Activated CD4-positive, alpha-beta T cell treated with anti-CD3 and anti-CD28 coated beads for 36 hours (primary cell): ENCODE measurements at regions of chr6 and their contacts with region 1.

Region 1: DNA sequence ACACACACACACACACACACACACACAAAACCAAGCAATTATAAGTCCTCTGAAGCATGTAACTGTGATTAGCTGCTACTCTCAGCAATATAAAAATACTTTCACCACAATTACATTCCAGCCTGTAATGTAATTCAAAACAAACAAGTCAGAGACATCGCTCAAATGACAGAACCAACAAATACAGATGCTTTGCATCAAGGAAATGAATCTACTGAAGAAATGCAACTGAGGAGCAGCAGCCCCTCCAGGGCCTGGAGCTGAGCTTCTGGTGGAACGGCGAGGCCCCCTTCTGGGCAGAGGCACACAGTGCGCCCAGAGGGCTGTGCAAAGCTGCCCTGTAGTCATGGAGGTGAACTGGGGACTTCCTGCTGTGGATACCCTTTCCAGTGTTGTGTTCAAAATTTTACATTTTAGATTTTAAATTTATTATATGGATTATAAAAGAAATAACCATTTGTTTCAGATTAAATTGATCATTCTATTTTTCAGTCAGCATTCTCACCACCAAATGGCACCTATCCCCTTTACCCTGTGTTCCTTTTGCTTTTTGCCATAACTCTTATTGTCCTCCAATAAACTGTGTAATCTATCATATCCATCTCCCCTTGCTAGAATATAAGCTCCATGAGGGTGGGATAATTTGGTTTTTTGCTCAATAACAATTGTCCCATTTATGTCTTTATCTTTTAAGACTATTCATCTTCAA is 23.2 kb downstream of the ADAT2 start:
- DNase-seq: peak; percentile 86
- ATAC-seq: peak; percentile 100
- H3K4me3 Mint-ChIP-seq: no peak overlapping the region
- H3K27ac Mint-ChIP-seq: no peak overlapping the region
- H3K4me1 Mint-ChIP-seq: peaks cover 7% of the 10 kb centered on the region
- H3K27me3 Mint-ChIP-seq: no peaks in the 10 kb centered on the region

Region 2: GRCh38 chr6:143026696-143027449 is 400.4 kb before region 1 on chr6:
- CTCF ChIA-PET with region 1: no interaction called
- POLR2A ChIA-PET with region 1: interaction called, 3 read pairs
- intact Hi-C with region 1: loop called in 1 of 2 experiments (anchors 5 kb)
- DNase-seq: peak; percentile 76
- ATAC-seq: peak; percentile 83
- H3K4me3 Mint-ChIP-seq: no peak overlapping the region
- H3K27ac Mint-ChIP-seq: no peak overlapping the region
- H3K4me1 Mint-ChIP-seq: peaks cover 5% of the 10 kb centered on the region
- H3K27me3 Mint-ChIP-seq: no peaks in the 10 kb centered on the region

Region 3: GRCh38 chr6:143232849-143233248 is 194.4 kb before region 1 on chr6:
- CTCF ChIA-PET with region 1: interaction called, 15 read pairs
- POLR2A ChIA-PET with region 1: no interaction called
- intact Hi-C with region 1: loop called (anchors 1 to 5 kb)
- DNase-seq: peak; percentile 63
- ATAC-seq: no peak
- H3K4me3 Mint-ChIP-seq: no peak overlapping the region
- H3K27ac Mint-ChIP-seq: no peak overlapping the region
- H3K4me1 Mint-ChIP-seq: no peaks in the 10 kb centered on the region
- H3K27me3 Mint-ChIP-seq: no peaks in the 10 kb centered on the region

Region 4: GRCh38 chr6:143414769-143415168 is 12.5 kb before region 1 on chr6:
- CTCF ChIA-PET with region 1: interaction called, 12 read pairs
- POLR2A ChIA-PET with region 1: no interaction called
- intact Hi-C with region 1: no loop called
- DNase-seq: no peak
- ATAC-seq: no peak
- H3K4me3 Mint-ChIP-seq: no peak overlapping the region
- H3K27ac Mint-ChIP-seq: no peak overlapping the region
- H3K4me1 Mint-ChIP-seq: no peaks in the 10 kb centered on the region
- H3K27me3 Mint-ChIP-seq: no peaks in the 10 kb centered on the region

Region 5: GRCh38 chr6:143457563-143458359 is 30.5 kb after region 1 on chr6:
- CTCF ChIA-PET with region 1: no interaction called
- POLR2A ChIA-PET with region 1: no interaction called
- intact Hi-C with region 1: no loop called
- DNase-seq: no peak
- ATAC-seq: no peak
- H3K4me3 Mint-ChIP-seq: no peak overlapping the region
- H3K27ac Mint-ChIP-seq: no peak overlapping the region
- H3K4me1 Mint-ChIP-seq: peaks cover 22% of the 10 kb centered on the region
- H3K27me3 Mint-ChIP-seq: no peaks in the 10 kb centered on the region